MCF 10A (cell line): ENCODE measurements at regions of chr1 and their contacts with region 1.

Region 1: GRCh38 chr1:157505481-157506272 is 46.6 kb downstream of the FCRL5 start:
- DNase-seq: peak; percentile 78
- H3K4me3 Mint-ChIP-seq: no peak overlapping the region
- H3K27ac Mint-ChIP-seq: no peak overlapping the region
- H3K4me1 Mint-ChIP-seq: no peaks in the 10 kb centered on the region
- H3K27me3 Mint-ChIP-seq: peaks cover 35% of the 10 kb centered on the region
- CTCF ChIP-seq: peak; percentile 82

Region 2: DNA sequence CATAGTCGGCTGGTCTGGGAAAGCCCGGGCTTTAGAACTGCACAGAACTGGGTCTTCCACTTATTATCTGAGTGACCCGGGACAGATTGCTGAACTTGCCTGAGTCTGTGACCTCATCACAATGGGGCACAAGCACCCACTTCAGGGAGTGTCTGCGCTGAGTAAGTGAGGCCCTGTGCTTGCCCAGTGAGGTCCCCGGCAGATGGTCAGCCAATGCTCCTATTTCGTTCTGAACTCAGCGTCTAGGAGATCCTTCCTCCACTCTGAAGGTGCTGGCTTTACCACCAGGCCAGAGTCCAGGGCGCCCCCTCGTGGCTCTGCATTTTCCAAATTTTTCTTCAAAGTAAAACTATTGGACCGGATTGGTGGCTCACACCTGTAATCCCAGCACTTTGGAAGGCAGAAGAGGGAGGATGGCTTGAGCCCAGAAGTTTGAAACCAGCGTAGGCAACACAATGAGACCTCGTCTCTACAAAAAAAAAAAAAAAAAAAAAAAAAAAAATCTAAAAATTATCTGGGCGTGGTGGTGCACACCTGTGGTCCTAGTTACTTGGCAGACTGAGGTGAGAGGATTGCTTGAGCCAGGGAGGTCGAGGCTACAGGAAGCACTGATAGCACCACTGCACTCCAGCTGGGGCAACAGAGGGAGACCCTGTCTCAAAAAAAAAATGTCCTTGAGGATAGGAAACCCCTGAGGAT is 15.1 kb before region 1 on chr1:
- CTCF ChIA-PET with region 1: interaction called, 41 read pairs
- POLR2A ChIA-PET with region 1: no interaction called
- intact Hi-C with region 1: no loop called
- DNase-seq: peak; percentile 80
- H3K4me3 Mint-ChIP-seq: no peak overlapping the region
- H3K27ac Mint-ChIP-seq: no peak overlapping the region
- H3K4me1 Mint-ChIP-seq: peaks cover 5% of the 10 kb centered on the region
- H3K27me3 Mint-ChIP-seq: peaks cover 44% of the 10 kb centered on the region
- CTCF ChIP-seq: peak; percentile 82

Region 3: DNA sequence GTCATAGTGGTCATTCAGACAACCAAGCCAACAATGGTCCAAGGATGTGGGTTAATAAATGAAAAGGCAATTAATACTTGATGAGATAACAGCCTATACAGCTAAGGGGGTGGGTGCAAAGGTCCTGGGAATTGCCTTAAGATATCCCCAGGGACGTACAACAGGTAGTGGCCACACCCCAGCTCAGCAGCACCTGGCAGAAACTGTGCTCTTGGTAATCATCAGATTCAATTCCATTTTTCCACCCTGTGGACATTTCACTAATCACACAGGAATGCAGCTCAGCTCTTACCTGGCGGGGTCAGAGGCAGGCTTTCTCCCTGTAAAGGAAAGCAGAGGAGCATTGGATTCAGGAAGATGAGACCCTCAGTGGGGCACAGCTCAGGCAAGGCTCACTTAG is 13.8 kb after region 1 on chr1:
- CTCF ChIA-PET with region 1: interaction called, 11 read pairs
- POLR2A ChIA-PET with region 1: no interaction called
- intact Hi-C with region 1: no loop called
- DNase-seq: no peak
- H3K4me3 Mint-ChIP-seq: no peak overlapping the region
- H3K27ac Mint-ChIP-seq: no peak overlapping the region
- H3K4me1 Mint-ChIP-seq: no peaks in the 10 kb centered on the region
- H3K27me3 Mint-ChIP-seq: peaks cover 12% of the 10 kb centered on the region
- CTCF ChIP-seq: no peak